Natural killer cell (primary cell): ENCODE measurements at regions of chr2 and their contacts with region 1.

Region 1: GRCh38 chr2:12501469-12502158 is 215.1 kb upstream of the TRIB2 start:
- DNase-seq: peak; percentile 26 to 73
- ATAC-seq: peak; percentile 74 to 80 (median 74)
- H3K4me3 ChIP-seq: no peak overlapping the region
- H3K4me3 Mint-ChIP-seq: peak overlapping the region; percentile 81
- H3K27ac ChIP-seq: peak overlapping the region; percentile 55
- H3K27ac Mint-ChIP-seq: peak overlapping the region; percentile 65 to 90
- H3K4me1 ChIP-seq: peaks cover 58% of the 10 kb centered on the region
- H3K4me1 Mint-ChIP-seq: peaks cover 86 to 93% of the 10 kb centered on the region in 2 donors
- H3K27me3 ChIP-seq: no peaks in the 10 kb centered on the region
- H3K27me3 Mint-ChIP-seq: no peaks in the 10 kb centered on the region
- CTCF ChIP-seq: no peak

Region 2: GRCh38 chr2:12347066-12347493 is 154.5 kb before region 1 on chr2:
- intact Hi-C with region 1: no loop called
- DNase-seq: no peak
- ATAC-seq: no peak
- H3K4me3 ChIP-seq: no peak overlapping the region
- H3K4me3 Mint-ChIP-seq: no peak overlapping the region
- H3K27ac ChIP-seq: no peak overlapping the region
- H3K27ac Mint-ChIP-seq: no peak overlapping the region
- H3K4me1 ChIP-seq: no peaks in the 10 kb centered on the region
- H3K4me1 Mint-ChIP-seq: no peaks in the 10 kb centered on the region
- H3K27me3 ChIP-seq: no peaks in the 10 kb centered on the region
- H3K27me3 Mint-ChIP-seq: peaks cover 10 to 13% of the 10 kb centered on the region in 2 donors
- CTCF ChIP-seq: no peak

Region 3: GRCh38 chr2:12456293-12457151 is 45.1 kb before region 1 on chr2:
- intact Hi-C with region 1: loop called (anchors 5 kb)
- DNase-seq: peak; percentile 68 to 70
- ATAC-seq: peak; percentile 89 to 94 (median 93)
- H3K4me3 ChIP-seq: peak overlapping the region; percentile 35
- H3K4me3 Mint-ChIP-seq: peak overlapping the region; percentile 91
- H3K27ac ChIP-seq: peak overlapping the region; percentile 85
- H3K27ac Mint-ChIP-seq: peak overlapping the region; percentile 93 to 96
- H3K4me1 ChIP-seq: peaks cover 13% of the 10 kb centered on the region
- H3K4me1 Mint-ChIP-seq: peaks cover 36 to 39% of the 10 kb centered on the region in 2 donors
- H3K27me3 ChIP-seq: no peaks in the 10 kb centered on the region
- H3K27me3 Mint-ChIP-seq: no peaks in the 10 kb centered on the region
- CTCF ChIP-seq: no peak

Region 4: GRCh38 chr2:12514631-12515433 is 13.2 kb after region 1 on chr2:
- intact Hi-C with region 1: loop called (anchors 2 kb)
- DNase-seq: peak in 1 of 2 donors; percentile 60
- ATAC-seq: peak; percentile 86 to 99 (median 94)
- H3K4me3 ChIP-seq: no peak overlapping the region
- H3K4me3 Mint-ChIP-seq: peak overlapping the region; percentile 58
- H3K27ac ChIP-seq: no peak overlapping the region
- H3K27ac Mint-ChIP-seq: peak overlapping the region in 1 of 2 donors; percentile 83
- H3K4me1 ChIP-seq: peaks cover 20% of the 10 kb centered on the region
- H3K4me1 Mint-ChIP-seq: peaks cover 25 to 32% of the 10 kb centered on the region in 2 donors
- H3K27me3 ChIP-seq: no peaks in the 10 kb centered on the region
- H3K27me3 Mint-ChIP-seq: peaks cover 9 to 30% of the 10 kb centered on the region in 2 donors
- CTCF ChIP-seq: no peak